ENCODE measurements at regions of chr7 and their contacts with region 1.

Region 1: GRCh38 chr7:2709553-2710285 is 21.7 kb downstream of the AMZ1 start:
- DNase-seq: peak; percentile 48
- H3K4me3 ChIP-seq: no peak overlapping the region
- H3K27ac ChIP-seq: no peak overlapping the region
- H3K4me1 ChIP-seq: no peaks in the 10 kb centered on the region
- H3K27me3 ChIP-seq: no peaks in the 10 kb centered on the region
- CTCF ChIP-seq: peak; percentile 85 to 96

Region 2: GRCh38 chr7:2670720-2671391 is 38.9 kb before region 1 on chr7:
- CTCF ChIA-PET with region 1: no interaction called
- dilution Hi-C with region 1: no loop called
- in situ Hi-C with region 1: no loop called
- intact Hi-C with region 1: loop called (anchors 1 kb)
- DNase-seq: peak; percentile 32
- H3K4me3 ChIP-seq: no peak overlapping the region
- H3K27ac ChIP-seq: no peak overlapping the region
- H3K4me1 ChIP-seq: no peaks in the 10 kb centered on the region
- H3K27me3 ChIP-seq: no peaks in the 10 kb centered on the region
- CTCF ChIP-seq: peak; percentile 79 to 86

Region 3: DNA sequence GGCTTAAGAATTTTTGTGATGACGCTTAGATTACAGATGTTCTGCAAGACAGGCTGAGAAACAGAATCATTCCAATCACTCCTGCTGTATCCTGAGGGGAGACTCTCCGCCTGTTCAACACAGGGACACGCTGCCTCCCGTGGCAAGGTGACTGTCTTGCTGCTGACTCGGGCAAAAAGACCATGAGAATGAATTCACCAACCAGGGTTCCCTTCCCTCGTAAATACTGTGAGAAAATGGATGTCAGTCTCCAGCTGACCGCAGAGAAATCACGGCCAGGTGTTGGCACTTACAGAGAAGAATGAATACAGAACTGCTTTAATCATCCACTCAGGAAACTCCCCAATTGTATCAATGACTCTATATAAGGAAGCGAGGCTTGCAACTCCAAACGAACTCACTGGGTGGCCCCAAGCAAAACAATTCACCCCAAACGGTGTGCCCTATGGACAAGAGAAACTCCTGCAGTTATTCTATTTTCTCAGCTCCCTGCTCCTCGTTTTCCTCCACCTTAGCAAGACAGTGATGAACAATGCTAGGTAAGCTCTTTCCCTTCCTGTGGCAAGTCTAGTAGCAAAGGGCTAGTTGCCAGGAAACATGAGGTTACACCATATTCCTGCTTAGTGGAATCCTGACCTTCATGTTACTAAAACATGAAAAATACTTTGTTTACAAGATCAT is 111.6 kb after region 1 on chr7:
- CTCF ChIA-PET with region 1: no interaction called
- dilution Hi-C with region 1: no loop called
- in situ Hi-C with region 1: no loop called
- intact Hi-C with region 1: no loop called
- DNase-seq: peak; percentile 95
- H3K4me3 ChIP-seq: no peak overlapping the region
- H3K27ac ChIP-seq: peak overlapping the region; percentile 92
- H3K4me1 ChIP-seq: peaks cover 47% of the 10 kb centered on the region
- H3K27me3 ChIP-seq: no peaks in the 10 kb centered on the region
- CTCF ChIP-seq: peak; percentile 3 to 4